ENCODE measurements at regions of chr11 and their contacts with region 1.

Region 1: GRCh38 chr11:41419901-41420300 is 39.6 kb downstream of the LRRC4C start:
- DNase-seq: no peak
- H3K4me3 ChIP-seq: no peak overlapping the region
- H3K27ac ChIP-seq: no peak overlapping the region
- H3K4me1 ChIP-seq: no peaks in the 10 kb centered on the region
- H3K27me3 ChIP-seq: no peaks in the 10 kb centered on the region
- CTCF ChIP-seq: no peak
- EP300 ChIP-seq: no peak
- RAD21 ChIP-seq: no peak

Region 2: DNA sequence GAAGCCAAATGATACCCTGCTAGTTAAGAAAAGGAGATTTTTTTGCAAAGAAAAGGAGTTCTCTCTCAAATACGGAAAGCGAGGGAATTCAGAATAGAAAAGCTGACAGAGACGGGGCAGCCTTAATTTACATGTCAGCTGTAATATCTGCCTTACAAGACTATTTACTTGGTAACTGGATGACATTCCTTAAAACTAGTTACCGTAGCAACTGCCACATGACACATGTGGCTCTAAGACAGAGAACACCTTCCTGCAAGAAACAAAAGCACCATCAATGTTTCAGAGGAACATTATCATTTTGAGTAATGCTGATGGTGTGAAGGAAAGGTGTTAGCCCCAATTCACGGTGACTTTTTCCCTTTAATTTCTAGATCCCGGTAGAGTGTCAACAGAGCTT is 182.5 kb before region 1 on chr11:
- CTCF ChIA-PET with region 1: no interaction called
- POLR2A ChIA-PET with region 1: no interaction called
- DNase-seq: no peak
- H3K4me3 ChIP-seq: no peak overlapping the region
- H3K27ac ChIP-seq: no peak overlapping the region
- H3K4me1 ChIP-seq: no peaks in the 10 kb centered on the region
- H3K27me3 ChIP-seq: no peaks in the 10 kb centered on the region
- CTCF ChIP-seq: no peak
- EP300 ChIP-seq: no peak
- RAD21 ChIP-seq: no peak

Region 3: GRCh38 chr11:41431784-41432183 is 11.9 kb after region 1 on chr11:
- CTCF ChIA-PET with region 1: interaction called, 13 read pairs
- POLR2A ChIA-PET with region 1: no interaction called
- DNase-seq: peak; percentile 36
- H3K4me3 ChIP-seq: no peak overlapping the region; a peak in 1 of 4 replicates
- H3K27ac ChIP-seq: no peak overlapping the region
- H3K4me1 ChIP-seq: peaks cover 0 to 5% of the 10 kb centered on the region in 2 experiments; a peak in 1 of 4 replicates
- H3K27me3 ChIP-seq: no peaks in the 10 kb centered on the region
- CTCF ChIP-seq: peak; percentile 60
- EP300 ChIP-seq: no peak
- RAD21 ChIP-seq: peak; percentile 67

Measured in SK-N-SH (cell line).